ENCODE measurements at regions of chr15 and their contacts with region 1.

Region 1: GRCh38 chr15:90902040-90902839 is 862 bp upstream of the MAN2A2 start:
- DNase-seq: peak; percentile 68 to 79
- ATAC-seq: peak; percentile 76 to 79
- H3K4me3 ChIP-seq: peak overlapping the region; percentile 63 to 80 (median 74)
- H3K27ac ChIP-seq: peak overlapping the region; percentile 85 to 97 (median 94)
- H3K4me1 ChIP-seq: peaks cover 19 to 23% of the 10 kb centered on the region in 2 donors
- H3K27me3 ChIP-seq: no peaks in the 10 kb centered on the region
- CTCF ChIP-seq: peak; percentile 70 to 88 (median 81)
- POLR2A ChIP-seq: peak; percentile 37 to 58

Region 2: DNA sequence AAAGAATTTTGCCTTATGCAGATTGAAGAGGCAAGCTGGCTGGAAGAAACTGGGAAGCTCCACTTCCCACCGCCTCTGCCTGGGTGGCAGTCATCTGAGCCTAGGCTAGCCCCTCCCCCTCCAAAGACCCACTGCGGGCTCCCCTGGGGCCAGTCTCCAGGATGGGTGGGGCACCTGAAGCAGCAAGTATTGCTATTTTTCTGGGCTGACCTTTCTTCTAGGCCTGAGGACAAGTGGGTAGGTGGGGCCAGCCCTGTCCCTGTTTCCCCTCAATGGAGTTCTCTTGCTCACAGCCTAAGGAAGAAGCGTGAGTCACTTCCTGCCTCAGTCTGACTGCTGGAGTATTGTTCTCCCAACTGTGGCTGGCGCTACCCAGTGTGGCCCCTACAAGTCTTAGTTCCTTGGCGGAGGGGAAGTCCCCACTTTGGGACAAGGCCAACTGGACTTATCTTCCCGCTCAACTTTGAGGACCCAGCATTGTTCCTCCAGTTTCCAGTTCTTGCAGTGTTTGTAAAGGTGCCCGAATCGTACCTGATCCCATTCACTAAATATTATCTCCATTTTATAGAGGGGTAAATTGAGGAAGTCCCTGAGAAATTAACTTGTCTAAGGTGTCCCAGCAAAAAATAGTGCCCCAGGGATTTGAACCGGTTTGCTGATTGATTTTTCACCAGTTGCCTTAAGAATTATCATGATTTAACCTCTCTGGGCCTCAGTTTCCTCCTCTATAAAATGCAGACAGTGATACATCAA is 32.5 kb before region 1 on chr15:
- in situ Hi-C with region 1: no loop called
- intact Hi-C with region 1: loop called (anchors 2 kb)
- DNase-seq: peak; percentile 56 to 66
- ATAC-seq: peak; percentile 22 to 42
- H3K4me3 ChIP-seq: peak overlapping the region in 1 of 4 donors; percentile 79
- H3K27ac ChIP-seq: peak overlapping the region; percentile 93 to 98 (median 96)
- H3K4me1 ChIP-seq: peaks cover 30 to 42% of the 10 kb centered on the region in 2 donors
- H3K27me3 ChIP-seq: no peaks in the 10 kb centered on the region
- CTCF ChIP-seq: no peak
- POLR2A ChIP-seq: peak; percentile 16 to 39

Region 3: GRCh38 chr15:90915808-90916440 is 13.7 kb after region 1 on chr15:
- in situ Hi-C with region 1: no loop called
- intact Hi-C with region 1: loop called (anchors 1 kb)
- DNase-seq: peak; percentile 84 to 94
- ATAC-seq: peak; percentile 80 to 84
- H3K4me3 ChIP-seq: peak overlapping the region in 3 of 4 donors; percentile 17 to 43 (median 27)
- H3K27ac ChIP-seq: peak overlapping the region; percentile 86 to 95 (median 90)
- H3K4me1 ChIP-seq: peaks cover 14 to 37% of the 10 kb centered on the region in 2 donors
- H3K27me3 ChIP-seq: no peaks in the 10 kb centered on the region
- CTCF ChIP-seq: no peak
- POLR2A ChIP-seq: peak in 1 of 2 donors; percentile 23

Region 4: DNA sequence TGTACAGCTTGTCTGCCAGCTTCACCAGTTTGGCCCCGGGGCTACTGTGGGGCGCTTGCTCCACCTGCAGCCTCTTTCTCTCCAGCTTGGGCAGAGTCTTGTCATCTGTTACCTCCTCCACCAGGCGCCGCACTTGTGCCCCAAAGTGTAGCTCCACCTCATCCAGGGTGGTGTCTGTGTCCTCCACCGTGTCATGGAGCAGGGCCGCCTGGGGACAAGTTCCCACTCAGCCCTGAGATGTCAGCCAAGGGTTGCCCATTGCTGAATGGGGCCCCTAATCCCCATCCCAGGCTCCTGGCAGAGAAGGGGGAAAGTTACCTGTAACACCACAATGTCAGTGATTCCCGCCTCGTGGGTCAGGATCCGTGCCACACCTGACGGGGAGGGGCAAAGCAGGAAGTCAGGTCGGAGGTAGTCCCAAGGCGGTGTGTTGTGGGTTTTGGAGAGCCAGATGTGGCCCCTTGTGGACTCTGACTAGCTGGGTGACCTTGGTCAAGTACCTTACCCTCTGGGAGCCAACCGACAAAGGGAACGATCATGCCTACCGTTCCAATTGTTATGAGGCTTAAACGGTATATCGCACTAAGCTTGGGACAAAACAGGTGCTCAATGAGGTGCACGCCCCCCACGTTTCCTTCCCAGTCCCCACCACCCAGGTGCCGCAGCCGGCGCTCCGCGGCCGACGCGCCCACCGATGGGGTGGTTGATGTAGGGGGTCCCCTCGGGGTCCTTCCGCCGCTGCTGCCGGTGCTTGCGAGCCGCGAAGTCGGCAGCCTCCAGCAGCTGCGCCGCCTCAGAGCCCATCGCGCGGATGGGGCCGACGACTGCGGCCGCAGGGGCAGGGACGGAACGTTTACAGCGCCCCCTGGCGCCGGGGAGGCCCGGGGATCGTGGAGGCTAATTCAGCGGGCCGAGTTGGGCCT is 29.8 kb after region 1 on chr15 and contains the start of gene HDDC3:
- in situ Hi-C with region 1: no loop called
- intact Hi-C with region 1: loop called (anchors 1 kb)
- DNase-seq: peak; percentile 72 to 86
- ATAC-seq: peak; percentile 49 to 65
- H3K4me3 ChIP-seq: peak within 1 kb of the TSS; percentile 66 to 92 (median 87)
- H3K27ac ChIP-seq: peak within 1 kb of the TSS; percentile 84 to 95 (median 89)
- H3K4me1 ChIP-seq: peaks cover 47 to 48% of the 10 kb centered on the region in 2 donors
- H3K27me3 ChIP-seq: no peaks in the 10 kb centered on the region
- CTCF ChIP-seq: peak; percentile 91 to 95 (median 92)
- POLR2A ChIP-seq: peak; percentile 34 to 69
- total RNA-seq, gene HDDC3: 13.4 to 22.2 (median 17.2) TPM

Region 5: DNA sequence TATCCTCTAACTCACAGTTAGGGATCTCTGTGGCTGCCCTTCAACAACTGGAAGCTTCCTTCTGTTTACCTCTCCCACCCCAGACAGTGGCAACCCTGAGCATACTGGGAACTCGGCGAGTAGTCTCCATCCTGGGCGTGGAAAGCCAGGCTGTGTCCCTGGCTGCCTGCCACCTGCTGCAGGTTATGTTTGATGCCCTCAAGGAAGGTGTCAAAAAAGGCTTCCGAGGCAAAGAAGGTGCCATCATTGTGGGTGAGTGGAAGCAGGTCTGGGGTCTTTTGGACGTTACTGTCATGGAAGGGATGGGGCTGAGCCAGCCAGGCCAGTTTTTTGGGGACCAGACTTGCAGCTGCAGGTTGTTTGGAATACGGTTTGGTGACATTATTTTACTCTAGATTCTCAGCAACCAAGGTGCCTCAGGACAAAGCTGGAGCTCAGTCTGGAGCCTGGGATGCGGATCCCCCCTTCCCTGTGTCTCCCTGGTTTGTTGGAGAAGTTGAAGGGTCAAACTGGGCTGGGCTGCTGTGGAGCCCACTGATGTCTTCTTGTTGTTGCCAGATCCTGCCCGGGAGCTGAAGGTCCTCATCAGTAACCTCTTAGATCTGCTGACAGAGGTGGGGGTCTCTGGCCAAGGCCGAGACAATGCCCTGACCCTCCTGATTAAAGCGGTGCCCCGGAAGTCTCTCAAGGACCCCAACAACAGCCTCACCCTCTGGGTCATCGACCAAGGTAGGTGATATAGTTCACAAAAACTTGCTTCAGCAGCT is 40.3 kb after region 1 on chr15:
- in situ Hi-C with region 1: no loop called
- intact Hi-C with region 1: no loop called
- DNase-seq: no peak
- ATAC-seq: no peak
- H3K4me3 ChIP-seq: no peak overlapping the region
- H3K27ac ChIP-seq: no peak overlapping the region
- H3K4me1 ChIP-seq: no peaks in the 10 kb centered on the region
- H3K27me3 ChIP-seq: no peaks in the 10 kb centered on the region
- CTCF ChIP-seq: no peak
- POLR2A ChIP-seq: no peak

Region 6: GRCh38 chr15:90994417-90995311 is 92.4 kb after region 1 on chr15 and contains the start of gene PRC1:
- in situ Hi-C with region 1: no loop called
- intact Hi-C with region 1: loop called (anchors 1 kb)
- DNase-seq: peak; percentile 97 to 98
- ATAC-seq: peak; percentile 98
- H3K4me3 ChIP-seq: peak within 1 kb of the TSS; percentile 77 to 99 (median 87)
- H3K27ac ChIP-seq: peak within 1 kb of the TSS; percentile 75 to 86 (median 82)
- H3K4me1 ChIP-seq: peaks cover 0 to 13% of the 10 kb centered on the region in 2 donors
- H3K27me3 ChIP-seq: no peaks in the 10 kb centered on the region
- CTCF ChIP-seq: no peak
- POLR2A ChIP-seq: peak; percentile 48 to 68
- total RNA-seq, gene PRC1: 1.4 to 9.9 (median 4.9) TPM